ENCODE measurements at regions of chr9 and their contacts with region 1.

Region 1: GRCh38 chr9:32571969-32572899 is 725 bp downstream of the NDUFB6 start:
- DNase-seq: peak; percentile 87
- H3K4me3 ChIP-seq: peak overlapping the region; percentile 98
- H3K27ac ChIP-seq: peak overlapping the region; percentile 77
- H3K4me1 ChIP-seq: peaks cover 29% of the 10 kb centered on the region
- CTCF ChIP-seq: peak; percentile 95

Region 2: DNA sequence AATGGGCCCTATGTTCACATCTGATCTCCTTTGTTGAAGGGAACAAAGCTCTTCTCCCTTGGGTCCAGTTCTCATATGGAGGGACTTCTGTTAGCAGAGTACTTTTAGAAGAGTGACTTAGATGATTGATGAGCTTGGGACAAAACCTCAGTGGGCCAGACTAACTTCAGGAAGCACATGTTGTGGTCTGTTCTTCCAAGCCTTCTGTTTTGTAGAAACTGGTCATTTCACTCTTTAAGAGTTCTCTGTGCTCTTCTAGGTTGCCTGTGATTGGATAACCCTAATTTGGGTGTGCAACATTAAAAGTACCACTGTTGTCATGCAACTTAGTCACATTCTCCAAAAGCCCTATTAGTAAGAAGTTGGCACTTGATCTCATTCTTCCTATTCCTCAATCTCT is 371.3 kb before region 1 on chr9:
- CTCF ChIA-PET with region 1: no interaction called
- POLR2A ChIA-PET with region 1: no interaction called
- intact Hi-C with region 1: no loop called
- DNase-seq: no peak
- H3K4me3 ChIP-seq: no peak overlapping the region
- H3K27ac ChIP-seq: no peak overlapping the region
- H3K4me1 ChIP-seq: no peaks in the 10 kb centered on the region
- CTCF ChIP-seq: no peak

Region 3: DNA sequence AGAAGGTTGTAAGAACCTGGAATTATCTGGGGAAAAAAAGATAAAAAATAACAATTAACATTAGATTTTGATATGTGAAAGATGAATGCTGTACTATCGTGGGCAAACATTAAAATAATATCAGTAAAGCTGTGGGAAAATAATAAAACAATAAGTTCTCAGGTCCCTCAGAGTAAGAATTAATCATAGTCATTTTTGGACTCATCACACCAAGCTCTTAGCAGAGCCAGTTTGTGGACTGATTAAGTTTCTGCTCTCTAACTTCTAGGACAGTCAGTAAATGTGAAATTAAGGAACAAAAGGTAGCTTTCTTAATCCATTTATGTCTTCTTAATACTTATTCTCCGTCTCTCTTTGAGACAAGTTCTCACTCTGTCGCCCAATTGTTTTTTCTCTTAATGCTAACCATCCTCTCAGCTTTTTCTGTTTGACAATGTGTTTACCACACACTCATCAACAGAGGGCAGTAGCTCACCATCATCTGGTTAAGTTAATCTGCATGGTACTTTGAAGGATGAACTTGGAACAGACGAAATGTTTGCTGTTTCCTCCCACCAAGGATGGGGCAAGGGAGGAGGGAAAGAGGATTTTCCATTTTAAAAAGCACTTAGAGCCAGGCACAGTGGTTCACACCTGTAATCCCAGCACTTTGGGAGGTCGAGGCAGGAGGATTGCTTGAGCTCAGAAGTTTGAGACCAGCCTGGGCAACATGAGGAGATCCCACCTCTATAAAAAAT is 193.1 kb before region 1 on chr9:
- CTCF ChIA-PET with region 1: interaction called, 11 read pairs
- POLR2A ChIA-PET with region 1: interaction called, 8 read pairs
- intact Hi-C with region 1: loop called (anchors 1 kb)
- DNase-seq: peak; percentile 85
- H3K4me3 ChIP-seq: peak overlapping the region; percentile 29
- H3K27ac ChIP-seq: no peak overlapping the region
- H3K4me1 ChIP-seq: peaks cover 27% of the 10 kb centered on the region
- CTCF ChIP-seq: peak; percentile 89

Region 4: GRCh38 chr9:32384364-32385151 is 187.7 kb before region 1 on chr9 and contains the start of gene ACO1:
- CTCF ChIA-PET with region 1: interaction called, 11 read pairs
- POLR2A ChIA-PET with region 1: interaction called, 8 read pairs
- intact Hi-C with region 1: loop called (anchors 1 kb)
- DNase-seq: peak; percentile 87
- H3K4me3 ChIP-seq: peak within 1 kb of the TSS; percentile 93
- H3K27ac ChIP-seq: no peak within 1 kb of the TSS
- H3K4me1 ChIP-seq: peaks cover 23% of the 10 kb centered on the region
- CTCF ChIP-seq: peak; percentile 48; the same call in 1 of the 2 replicates
- total RNA-seq, gene ACO1: 8.8 and 9.2 TPM in 2 replicates

Region 5: GRCh38 chr9:32502464-32502863 is 69.8 kb before region 1 on chr9:
- CTCF ChIA-PET with region 1: no interaction called
- POLR2A ChIA-PET with region 1: no interaction called
- intact Hi-C with region 1: no loop called
- DNase-seq: no peak
- H3K4me3 ChIP-seq: no peak overlapping the region
- H3K27ac ChIP-seq: no peak overlapping the region
- H3K4me1 ChIP-seq: no peaks in the 10 kb centered on the region
- CTCF ChIP-seq: no peak

Region 6: GRCh38 chr9:32533336-32533735 is 38.9 kb before region 1 on chr9:
- CTCF ChIA-PET with region 1: no interaction called
- POLR2A ChIA-PET with region 1: interaction called, 3 read pairs
- intact Hi-C with region 1: loop called (anchors 5 kb)
- DNase-seq: no peak
- H3K4me3 ChIP-seq: no peak overlapping the region
- H3K27ac ChIP-seq: no peak overlapping the region
- H3K4me1 ChIP-seq: no peaks in the 10 kb centered on the region
- CTCF ChIP-seq: no peak

Region 7: DNA sequence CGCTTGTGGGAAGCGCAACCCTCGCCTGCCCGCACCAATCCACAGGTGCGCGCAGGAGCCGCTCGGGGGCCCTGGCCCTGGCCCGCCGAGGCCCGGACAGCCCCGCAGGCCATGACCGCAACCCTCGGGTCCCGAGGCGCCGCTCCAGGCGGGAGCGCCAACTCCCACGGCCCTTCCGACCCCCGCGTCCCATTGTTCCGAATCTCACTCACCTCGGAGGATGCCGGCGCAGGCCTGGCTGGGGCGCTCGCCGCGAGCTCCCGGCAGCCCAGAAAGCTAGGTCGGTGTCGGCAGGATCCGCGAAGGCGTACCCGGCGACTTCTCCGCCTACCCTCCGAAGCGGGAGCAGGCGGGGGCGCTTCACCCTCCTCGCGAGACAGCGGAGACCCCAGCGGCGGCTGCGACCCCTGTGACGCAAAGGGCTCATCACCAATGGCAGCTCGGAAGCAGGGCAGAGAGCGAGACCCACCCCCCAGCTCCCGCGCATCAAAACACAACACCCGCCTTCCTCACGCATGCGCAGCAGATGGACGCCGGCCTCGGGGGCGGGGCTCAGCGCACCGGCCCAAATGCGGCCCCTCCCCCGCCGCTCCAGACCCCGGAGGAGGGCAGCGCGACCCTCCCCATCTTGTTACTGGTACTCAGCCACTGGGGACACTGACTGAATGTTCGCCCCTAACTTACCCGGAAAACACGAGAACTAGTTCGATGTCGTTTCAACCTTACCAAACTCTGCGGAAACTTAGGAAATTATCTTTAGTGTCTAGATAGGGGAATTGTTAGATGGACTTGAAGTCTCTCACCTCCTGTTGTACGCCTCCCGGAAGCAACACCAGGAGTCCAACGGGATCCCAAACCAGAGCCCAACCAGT is 21.4 kb before region 1 on chr9:
- CTCF ChIA-PET with region 1: interaction called, 8 read pairs
- POLR2A ChIA-PET with region 1: interaction called, 19 read pairs
- intact Hi-C with region 1: loop called (anchors 1 kb)
- DNase-seq: peak; percentile 95
- H3K4me3 ChIP-seq: peak overlapping the region; percentile 82
- H3K27ac ChIP-seq: peak overlapping the region; percentile 89
- H3K4me1 ChIP-seq: peaks cover 21% of the 10 kb centered on the region
- CTCF ChIP-seq: peak; percentile 34; the same call in 1 of the 2 replicates

Region 8: DNA sequence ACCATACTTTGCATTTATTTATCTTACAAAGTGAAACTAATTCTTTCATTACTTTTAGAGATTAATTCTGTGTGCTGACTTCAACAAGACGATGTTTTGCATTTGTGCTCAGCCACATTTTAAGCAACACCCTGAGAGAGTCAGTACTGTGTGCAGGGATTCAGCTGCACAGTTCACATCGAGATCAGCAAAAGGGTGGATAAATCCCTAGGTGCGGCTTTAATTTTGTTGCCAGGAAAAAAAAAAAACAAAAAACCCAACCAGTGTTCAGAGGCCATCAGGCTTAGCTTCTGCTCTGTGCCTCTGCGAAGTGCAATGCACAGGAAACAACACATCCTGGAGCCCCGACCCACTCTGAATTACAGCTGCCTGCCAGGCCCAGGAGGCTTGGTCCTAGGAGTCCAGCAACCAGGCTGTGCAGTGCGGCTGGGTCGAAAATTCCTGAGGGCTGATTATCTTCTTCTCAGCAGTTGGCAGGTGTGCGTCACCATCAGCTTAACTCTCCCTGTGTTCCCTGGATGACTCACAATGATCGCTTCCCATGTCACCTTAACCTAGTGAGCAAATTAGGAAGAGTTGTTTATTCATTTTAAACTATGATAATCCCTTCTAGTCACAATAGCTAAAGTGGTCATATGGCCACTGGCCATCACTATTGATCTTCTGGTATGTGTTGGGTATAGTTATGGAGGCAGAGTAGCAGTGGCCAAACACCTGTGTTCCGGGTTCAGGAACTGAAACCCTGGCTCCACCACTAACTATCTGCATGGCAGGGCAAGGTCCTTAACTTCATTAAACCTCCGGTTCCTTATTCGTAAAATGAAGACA is 31.9 kb after region 1 on chr9:
- CTCF ChIA-PET with region 1: no interaction called
- POLR2A ChIA-PET with region 1: interaction called, 15 read pairs
- intact Hi-C with region 1: no loop called
- DNase-seq: peak; percentile 85
- H3K4me3 ChIP-seq: peak overlapping the region; percentile 50
- H3K27ac ChIP-seq: peak overlapping the region; percentile 64
- H3K4me1 ChIP-seq: peaks cover 46% of the 10 kb centered on the region
- CTCF ChIP-seq: no peak

Region 9: GRCh38 chr9:32698779-32699178 is 126.5 kb after region 1 on chr9:
- CTCF ChIA-PET with region 1: no interaction called
- POLR2A ChIA-PET with region 1: no interaction called
- intact Hi-C with region 1: no loop called
- DNase-seq: no peak
- H3K4me3 ChIP-seq: no peak overlapping the region
- H3K27ac ChIP-seq: no peak overlapping the region
- H3K4me1 ChIP-seq: no peaks in the 10 kb centered on the region
- CTCF ChIP-seq: no peak